Activated CD8-positive, alpha-beta T cell treated with anti-CD3 and anti-CD28 coated beads, Interleukin-2, amount 10 ng/mL, durations not matched to agents 7 days and 5 days (primary cell): ENCODE measurements at regions of chr16 and their contacts with region 1.

Region 1: GRCh38 chr16:4253394-4254150 is 11.7 kb upstream of the SRL start:
- DNase-seq: peak; percentile 100
- ATAC-seq: peak; percentile 99
- H3K4me3 Mint-ChIP-seq: peak overlapping the region; percentile 94
- H3K27ac Mint-ChIP-seq: peak overlapping the region; percentile 97
- H3K4me1 Mint-ChIP-seq: peaks cover 11% of the 10 kb centered on the region
- H3K27me3 Mint-ChIP-seq: no peaks in the 10 kb centered on the region

Region 2: DNA sequence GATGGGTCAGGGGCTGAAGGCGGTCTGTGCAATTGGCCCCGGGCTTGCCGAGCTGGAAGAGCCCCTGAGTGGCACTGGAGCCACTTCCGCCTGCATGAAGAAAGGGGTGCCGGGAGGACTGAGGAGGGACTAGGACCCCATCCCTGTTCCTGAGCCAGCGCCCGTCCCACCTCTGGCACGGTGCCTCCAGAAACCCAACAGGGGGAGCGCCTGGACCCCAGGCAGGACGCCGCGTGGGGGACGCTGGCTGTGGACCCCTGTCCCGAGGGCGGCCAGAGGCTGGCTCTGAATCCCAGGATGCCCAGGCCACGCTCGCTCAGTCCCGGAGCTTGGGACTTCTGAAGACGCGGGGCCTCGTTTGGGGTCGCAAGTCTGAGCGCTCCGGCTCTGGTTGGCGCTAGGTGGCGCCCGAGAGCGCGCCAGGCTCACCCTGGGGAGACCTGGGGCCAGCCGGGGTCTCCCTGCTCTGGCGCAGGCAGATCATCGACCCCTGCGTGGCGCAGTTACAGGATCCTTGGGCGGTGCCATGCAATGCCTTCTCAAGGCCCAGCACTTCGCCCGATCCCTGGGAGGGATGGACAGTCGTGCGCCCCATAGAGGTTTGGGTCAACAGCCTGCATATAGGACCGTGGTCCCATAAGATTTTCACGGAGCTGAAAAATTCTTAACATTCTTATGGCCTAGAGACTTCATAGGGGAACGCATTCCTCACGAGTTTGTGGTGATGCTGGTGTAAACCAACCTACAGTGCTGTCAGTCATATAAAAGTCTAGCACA is 314.5 kb before region 1 on chr16:
- CTCF ChIA-PET with region 1: interaction called, 13 read pairs
- POLR2A ChIA-PET with region 1: no interaction called
- DNase-seq: peak; percentile 66
- ATAC-seq: peak; percentile 91
- H3K4me3 Mint-ChIP-seq: no peak overlapping the region
- H3K27ac Mint-ChIP-seq: no peak overlapping the region
- H3K4me1 Mint-ChIP-seq: peaks cover 4% of the 10 kb centered on the region
- H3K27me3 Mint-ChIP-seq: no peaks in the 10 kb centered on the region

Region 3: GRCh38 chr16:4116337-4117249 is 137.0 kb before region 1 on chr16 and contains the start of gene ADCY9:
- CTCF ChIA-PET with region 1: interaction called, 16 read pairs
- POLR2A ChIA-PET with region 1: no interaction called
- DNase-seq: peak; percentile 78
- ATAC-seq: peak; percentile 81
- H3K4me3 Mint-ChIP-seq: peak within 1 kb of the TSS; percentile 77
- H3K27ac Mint-ChIP-seq: peak within 1 kb of the TSS; percentile 74
- H3K4me1 Mint-ChIP-seq: peaks cover 40% of the 10 kb centered on the region
- H3K27me3 Mint-ChIP-seq: peaks cover 11% of the 10 kb centered on the region
- total RNA-seq, gene ADCY9: 6.2 to 6.3 TPM

Region 4: GRCh38 chr16:4225075-4225474 is 28.5 kb before region 1 on chr16:
- CTCF ChIA-PET with region 1: no interaction called
- POLR2A ChIA-PET with region 1: no interaction called
- DNase-seq: no peak
- ATAC-seq: no peak
- H3K4me3 Mint-ChIP-seq: no peak overlapping the region
- H3K27ac Mint-ChIP-seq: no peak overlapping the region
- H3K4me1 Mint-ChIP-seq: no peaks in the 10 kb centered on the region
- H3K27me3 Mint-ChIP-seq: no peaks in the 10 kb centered on the region

Region 5: GRCh38 chr16:4271176-4272066 is 17.8 kb after region 1 on chr16:
- CTCF ChIA-PET with region 1: interaction called, 39 read pairs
- POLR2A ChIA-PET with region 1: interaction called, 11 read pairs
- DNase-seq: peak; percentile 94
- ATAC-seq: peak; percentile 86
- H3K4me3 Mint-ChIP-seq: peak overlapping the region; percentile 84
- H3K27ac Mint-ChIP-seq: peak overlapping the region; percentile 95
- H3K4me1 Mint-ChIP-seq: peaks cover 19% of the 10 kb centered on the region
- H3K27me3 Mint-ChIP-seq: no peaks in the 10 kb centered on the region

Region 6: DNA sequence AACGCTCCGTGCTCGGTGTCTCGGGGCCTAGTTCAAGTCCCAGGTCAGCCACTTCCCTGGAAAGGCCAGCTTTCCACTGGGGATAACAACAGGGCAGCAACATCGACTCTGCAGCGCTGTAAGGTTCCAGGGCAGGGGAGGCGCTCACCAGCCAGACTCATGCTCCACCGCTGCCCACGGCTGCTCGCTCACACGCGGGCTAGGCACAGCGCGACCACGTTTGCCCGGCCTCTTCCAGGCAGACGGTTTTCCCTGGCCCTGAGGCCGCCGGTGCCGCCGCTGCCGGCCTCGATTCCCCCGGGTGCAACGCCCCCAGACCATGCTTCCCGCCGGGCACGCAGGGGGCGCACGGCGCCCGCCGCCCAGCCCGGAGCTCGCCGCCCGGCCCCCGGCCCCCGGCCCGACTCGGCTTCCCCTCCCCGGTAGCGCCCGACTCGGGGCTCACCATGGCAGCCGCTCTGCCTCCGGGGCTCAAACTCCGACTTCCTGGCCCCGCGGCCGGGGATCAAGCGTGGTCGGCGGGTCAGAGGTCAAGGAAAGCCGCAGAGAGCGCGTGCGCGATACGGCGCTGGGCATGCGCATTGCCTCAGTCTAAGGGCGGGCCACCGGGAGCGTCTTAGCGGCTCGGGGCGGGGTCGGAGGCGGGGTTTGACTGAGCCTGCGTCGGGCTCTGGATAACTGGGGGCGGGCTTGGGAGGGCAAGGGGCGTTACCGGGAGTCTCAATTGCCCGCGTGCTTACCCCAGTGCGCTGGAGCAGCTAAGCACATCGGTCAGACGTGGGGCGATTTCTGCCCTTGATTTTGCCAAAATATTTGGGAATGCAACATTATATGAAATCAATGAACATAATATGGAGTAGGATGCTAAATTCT is 97.5 kb after region 1 on chr16 and contains the start of gene PAM16:
- CTCF ChIA-PET with region 1: interaction called, 14 read pairs
- POLR2A ChIA-PET with region 1: no interaction called
- DNase-seq: peak; percentile 98
- ATAC-seq: peak; percentile 95
- H3K4me3 Mint-ChIP-seq: peak within 1 kb of the TSS; percentile 98
- H3K27ac Mint-ChIP-seq: peak within 1 kb of the TSS; percentile 92
- H3K4me1 Mint-ChIP-seq: peaks cover 17% of the 10 kb centered on the region
- H3K27me3 Mint-ChIP-seq: no peaks in the 10 kb centered on the region
- total RNA-seq, gene PAM16: 33.3 to 40.3 TPM